CD8-positive, alpha-beta T cell (primary cell): ENCODE measurements at regions of chr3 and their contacts with region 1.

Region 1: GRCh38 chr3:194671900-194672808 is at the start of gene LSG1:
- DNase-seq: peak; percentile 75 to 97 (median 91)
- ATAC-seq: peak; percentile 97
- H3K4me3 ChIP-seq: peak within 1 kb of the TSS; percentile 82 to 83
- H3K4me3 Mint-ChIP-seq: peak within 1 kb of the TSS; percentile 98
- H3K27ac ChIP-seq: peak within 1 kb of the TSS; percentile 88 to 92
- H3K27ac Mint-ChIP-seq: peak within 1 kb of the TSS; percentile 99
- H3K4me1 ChIP-seq: peaks cover 15% of the 10 kb centered on the region
- H3K4me1 Mint-ChIP-seq: peaks cover 45% of the 10 kb centered on the region
- H3K27me3 ChIP-seq: no peaks in the 10 kb centered on the region
- H3K27me3 Mint-ChIP-seq: no peaks in the 10 kb centered on the region
- CTCF ChIP-seq: no peak
- total RNA-seq, gene LSG1: 63.8 to 69.6 TPM

Region 2: GRCh38 chr3:194486540-194487288 is 185.4 kb before region 1 on chr3 and contains the start of gene ATP13A3:
- CTCF ChIA-PET with region 1: no interaction called
- POLR2A ChIA-PET with region 1: interaction called, 3 read pairs
- intact Hi-C with region 1: loop called in 1 of 2 experiments (anchors 1 kb)
- DNase-seq: peak; percentile 83 to 96 (median 90)
- ATAC-seq: peak; percentile 80
- H3K4me3 ChIP-seq: peak within 1 kb of the TSS; percentile 74 to 98
- H3K4me3 Mint-ChIP-seq: peak within 1 kb of the TSS; percentile 93
- H3K27ac ChIP-seq: peak within 1 kb of the TSS; percentile 58 to 85
- H3K27ac Mint-ChIP-seq: peak within 1 kb of the TSS; percentile 92
- H3K4me1 ChIP-seq: peaks cover 29% of the 10 kb centered on the region
- H3K4me1 Mint-ChIP-seq: peaks cover 43% of the 10 kb centered on the region
- H3K27me3 ChIP-seq: no peaks in the 10 kb centered on the region
- H3K27me3 Mint-ChIP-seq: no peaks in the 10 kb centered on the region
- CTCF ChIP-seq: no peak
- total RNA-seq, gene ATP13A3: 50.2 to 52.8 TPM

Region 3: GRCh38 chr3:194536871-194537637 is 135.1 kb before region 1 on chr3:
- CTCF ChIA-PET with region 1: no interaction called
- POLR2A ChIA-PET with region 1: no interaction called
- intact Hi-C with region 1: no loop called
- DNase-seq: no peak
- ATAC-seq: no peak
- H3K4me3 ChIP-seq: no peak overlapping the region
- H3K4me3 Mint-ChIP-seq: no peak overlapping the region
- H3K27ac ChIP-seq: no peak overlapping the region
- H3K27ac Mint-ChIP-seq: no peak overlapping the region
- H3K4me1 ChIP-seq: peaks cover 8% of the 10 kb centered on the region
- H3K4me1 Mint-ChIP-seq: peaks cover 8% of the 10 kb centered on the region
- H3K27me3 ChIP-seq: no peaks in the 10 kb centered on the region
- H3K27me3 Mint-ChIP-seq: peaks cover 2% of the 10 kb centered on the region
- CTCF ChIP-seq: no peak

Region 4: DNA sequence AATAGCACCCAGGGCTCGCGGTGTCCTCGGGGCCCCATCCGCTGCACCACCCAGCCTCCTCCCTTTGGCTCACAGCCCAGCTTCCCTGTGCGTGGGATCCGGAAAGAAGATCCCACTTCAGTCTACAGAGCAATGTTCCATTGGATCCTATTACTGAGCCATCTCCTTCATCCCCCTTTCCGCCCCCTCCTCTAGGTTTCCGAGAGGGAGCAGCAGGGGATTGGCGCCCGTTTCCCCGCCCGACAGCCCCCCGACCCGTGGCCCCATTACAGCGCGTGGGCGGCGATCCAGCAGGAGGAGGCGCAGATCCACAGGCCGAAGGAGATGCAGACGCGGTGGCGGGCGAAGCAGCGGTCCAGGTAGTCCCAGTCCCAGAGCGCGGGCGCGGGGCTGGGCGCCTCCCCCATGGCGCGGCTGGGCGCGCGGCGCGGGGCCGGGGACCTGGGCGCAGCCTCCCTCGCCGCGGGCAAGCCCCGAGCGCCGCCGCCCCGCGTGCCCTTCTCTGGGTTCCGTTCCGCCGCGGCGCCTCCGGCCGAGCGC is 39.3 kb before region 1 on chr3:
- CTCF ChIA-PET with region 1: interaction called, 14 read pairs
- POLR2A ChIA-PET with region 1: interaction called, 6 read pairs
- intact Hi-C with region 1: loop called in 1 of 2 experiments (anchors 1 kb)
- DNase-seq: peak in 2 of 9 experiments; percentile 2 to 22
- ATAC-seq: peak; percentile 43
- H3K4me3 ChIP-seq: peak overlapping the region; percentile 57 to 58
- H3K4me3 Mint-ChIP-seq: peak overlapping the region; percentile 90
- H3K27ac ChIP-seq: no peak overlapping the region
- H3K27ac Mint-ChIP-seq: peak overlapping the region; percentile 52
- H3K4me1 ChIP-seq: peaks cover 7% of the 10 kb centered on the region
- H3K4me1 Mint-ChIP-seq: peaks cover 9% of the 10 kb centered on the region
- H3K27me3 ChIP-seq: no peaks in the 10 kb centered on the region
- H3K27me3 Mint-ChIP-seq: no peaks in the 10 kb centered on the region
- CTCF ChIP-seq: no peak

Region 5: DNA sequence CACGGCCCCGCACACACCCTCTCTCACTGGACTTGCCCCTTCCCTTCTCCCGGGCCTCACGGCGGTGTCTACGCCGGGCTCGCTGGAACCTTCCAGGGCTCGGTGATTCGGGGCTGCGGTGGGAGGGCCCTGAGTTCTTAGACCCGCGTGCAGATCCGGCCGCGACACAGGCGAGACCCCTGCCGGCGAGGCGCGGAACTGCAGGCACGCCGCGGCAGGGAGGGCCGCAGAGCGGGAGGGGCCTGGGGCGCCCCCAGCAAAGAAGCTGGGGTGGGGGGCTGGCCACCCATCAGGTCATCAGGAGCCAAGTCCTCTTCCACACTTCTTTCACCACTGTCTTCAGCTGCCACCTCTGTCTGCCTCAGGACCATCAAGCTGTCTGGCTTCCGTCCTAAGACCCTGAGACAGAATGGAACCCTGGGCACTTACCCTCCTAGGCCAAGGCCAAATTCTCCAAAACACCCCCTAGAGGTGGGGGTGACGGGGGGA is 434.3 kb after region 1 on chr3:
- CTCF ChIA-PET with region 1: interaction called, 12 read pairs
- POLR2A ChIA-PET with region 1: no interaction called
- intact Hi-C with region 1: loop called in 1 of 2 experiments (anchors 1 kb)
- DNase-seq: peak; percentile 42 to 85 (median 66)
- ATAC-seq: peak; percentile 100
- H3K4me3 ChIP-seq: peak overlapping the region in 1 of 2 experiments; percentile 44
- H3K4me3 Mint-ChIP-seq: peak overlapping the region; percentile 51
- H3K27ac ChIP-seq: no peak overlapping the region
- H3K27ac Mint-ChIP-seq: no peak overlapping the region
- H3K4me1 ChIP-seq: no peaks in the 10 kb centered on the region
- H3K4me1 Mint-ChIP-seq: peaks cover 4% of the 10 kb centered on the region
- H3K27me3 ChIP-seq: no peaks in the 10 kb centered on the region
- H3K27me3 Mint-ChIP-seq: no peaks in the 10 kb centered on the region
- CTCF ChIP-seq: peak; percentile 99

Region 6: DNA sequence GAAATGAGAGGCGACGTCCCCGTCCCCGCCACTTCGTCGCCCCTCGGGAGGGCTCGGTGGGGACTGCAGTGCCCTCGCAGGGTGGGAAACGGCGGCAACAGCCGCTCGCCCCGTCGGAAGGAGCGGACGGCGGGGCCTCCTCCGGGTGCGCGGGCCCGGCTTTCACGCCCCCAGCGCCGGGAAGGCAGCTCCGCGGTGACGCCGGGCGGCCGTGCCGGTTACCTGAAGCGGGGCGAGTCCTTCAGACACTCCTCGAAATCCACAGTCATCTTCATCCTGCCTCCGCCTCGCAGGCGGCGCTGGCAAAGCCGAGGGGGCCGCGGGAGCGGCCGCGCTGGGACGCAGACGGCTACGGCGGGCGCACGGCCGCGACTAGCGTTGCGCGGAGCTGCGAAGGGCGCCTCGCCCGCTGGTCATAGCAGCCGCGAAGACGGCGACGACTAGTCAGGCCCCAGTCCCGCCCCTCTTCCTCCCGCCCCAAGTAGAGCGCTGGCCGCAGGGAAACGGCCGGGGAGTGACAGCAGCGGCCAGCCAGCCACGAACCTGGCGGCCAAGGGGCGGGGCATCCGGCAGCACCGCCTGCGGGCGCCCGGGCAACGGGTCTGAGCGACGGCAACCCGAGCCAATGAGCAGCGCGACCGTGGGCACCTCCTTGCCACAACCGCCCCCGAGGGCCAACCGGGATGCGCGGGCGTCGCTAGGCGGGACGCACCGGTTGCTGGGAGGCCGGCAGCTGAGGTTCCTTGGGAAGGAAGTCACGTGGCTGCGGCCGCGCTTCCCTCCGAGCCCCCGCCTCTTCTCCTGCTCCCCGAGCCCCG is 770.6 kb after region 1 on chr3 and contains the start of gene ACAP2:
- CTCF ChIA-PET with region 1: no interaction called
- POLR2A ChIA-PET with region 1: no interaction called
- intact Hi-C with region 1: loop called (anchors 5 kb)
- DNase-seq: peak; percentile 95 to 99 (median 99)
- ATAC-seq: peak; percentile 90
- H3K4me3 ChIP-seq: peak within 1 kb of the TSS; percentile 82 to 88
- H3K4me3 Mint-ChIP-seq: peak within 1 kb of the TSS; percentile 95
- H3K27ac ChIP-seq: peak within 1 kb of the TSS; percentile 74 to 82
- H3K27ac Mint-ChIP-seq: peak within 1 kb of the TSS; percentile 92
- H3K4me1 ChIP-seq: peaks cover 39% of the 10 kb centered on the region
- H3K4me1 Mint-ChIP-seq: peaks cover 64% of the 10 kb centered on the region
- H3K27me3 ChIP-seq: no peaks in the 10 kb centered on the region
- H3K27me3 Mint-ChIP-seq: no peaks in the 10 kb centered on the region
- CTCF ChIP-seq: no peak
- total RNA-seq, gene ACAP2: 38.9 to 41.1 TPM

Region 7: GRCh38 chr3:195542698-195543499 is 870.7 kb after region 1 on chr3 and contains the start of gene PPP1R2:
- CTCF ChIA-PET with region 1: no interaction called
- POLR2A ChIA-PET with region 1: interaction called, 6 read pairs
- intact Hi-C with region 1: loop called (anchors 1 to 5 kb)
- DNase-seq: peak; percentile 65 to 96 (median 93)
- ATAC-seq: peak; percentile 86
- H3K4me3 ChIP-seq: peak within 1 kb of the TSS; percentile 90 to 91
- H3K4me3 Mint-ChIP-seq: peak within 1 kb of the TSS; percentile 93
- H3K27ac ChIP-seq: peak within 1 kb of the TSS; percentile 92 to 98
- H3K27ac Mint-ChIP-seq: peak within 1 kb of the TSS; percentile 97
- H3K4me1 ChIP-seq: peaks cover 67% of the 10 kb centered on the region
- H3K4me1 Mint-ChIP-seq: peaks cover 75% of the 10 kb centered on the region
- H3K27me3 ChIP-seq: no peaks in the 10 kb centered on the region
- H3K27me3 Mint-ChIP-seq: no peaks in the 10 kb centered on the region
- CTCF ChIP-seq: no peak
- total RNA-seq, gene PPP1R2: 160 to 166 TPM